Vagina (tissue), 2 donors: ENCODE measurements at regions of chr6 and their contacts with region 1.

Region 1: DNA sequence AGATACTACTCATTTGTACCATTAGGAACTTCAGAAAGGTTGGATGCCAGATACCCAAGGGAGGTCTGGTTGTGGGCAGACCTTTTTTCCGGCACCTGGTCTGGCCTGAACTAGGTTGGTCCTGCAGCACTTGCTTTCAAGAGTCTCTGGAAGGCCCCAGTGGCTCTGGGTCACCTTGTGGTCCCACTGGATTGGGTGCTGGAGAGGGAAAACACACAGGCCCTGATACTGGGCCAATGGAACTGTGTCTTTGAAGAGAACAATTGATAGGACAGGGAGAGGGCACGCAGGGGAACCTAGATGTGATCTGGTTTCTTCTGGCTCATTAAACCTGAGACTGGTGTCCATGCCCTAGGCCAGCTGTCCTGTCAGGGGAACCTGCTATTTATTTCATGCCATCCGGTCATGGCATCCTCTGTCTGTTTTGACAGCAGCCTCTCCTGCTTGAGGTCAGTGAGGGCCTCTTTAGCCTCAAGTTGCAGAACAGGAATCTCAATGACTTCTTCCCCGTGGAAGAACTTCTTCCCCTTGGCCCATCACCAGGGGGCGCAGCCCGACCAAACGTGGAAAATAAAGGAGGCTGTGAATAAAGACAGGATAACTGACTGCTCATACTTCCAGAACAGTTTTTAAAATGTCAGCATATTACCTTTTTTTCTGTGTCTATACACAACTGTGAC is 25.0 kb downstream of the TAF8 start:
- DNase-seq: no peak
- H3K4me3 ChIP-seq: no peak overlapping the region
- H3K27ac ChIP-seq: no peak overlapping the region
- H3K4me1 ChIP-seq: no peaks in the 10 kb centered on the region
- H3K27me3 ChIP-seq: no peaks in the 10 kb centered on the region
- CTCF ChIP-seq: peak; percentile 49 to 68 (median 66)
- POLR2A ChIP-seq: no peak

Region 2: DNA sequence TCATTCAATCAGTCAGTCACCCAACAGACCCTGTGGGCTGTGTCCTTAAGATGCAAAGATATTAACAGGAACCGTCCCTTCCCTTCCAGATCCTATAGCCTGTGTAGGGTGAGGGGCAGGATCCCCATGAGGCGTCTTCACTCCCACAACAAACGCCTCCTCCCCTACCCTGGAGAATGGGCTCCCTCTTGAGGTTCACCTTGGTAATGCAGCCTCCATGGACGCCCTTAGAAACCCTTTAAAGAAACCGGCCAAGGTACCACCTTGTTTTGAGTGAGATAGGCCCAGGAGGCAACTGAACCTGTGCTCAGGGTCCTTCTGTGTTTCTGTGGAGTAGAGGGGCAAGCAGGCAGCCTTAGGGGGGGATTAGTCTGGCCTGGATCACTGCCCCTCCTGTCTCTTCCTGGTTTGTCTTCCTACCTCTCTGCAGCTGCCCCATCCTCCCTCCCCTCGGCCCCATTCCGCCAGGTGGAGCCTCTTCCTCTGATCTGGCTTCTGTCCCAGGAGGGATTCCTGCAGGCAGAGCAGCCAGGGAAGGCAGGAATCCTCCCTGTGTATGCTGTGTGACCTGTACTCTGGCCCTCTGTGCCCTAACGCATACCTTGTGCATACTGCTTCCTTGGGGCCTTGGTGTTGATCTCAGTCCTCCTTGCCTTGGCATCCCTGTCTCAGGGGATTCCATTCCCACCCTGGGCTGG is 91.3 kb after region 1 on chr6:
- intact Hi-C with region 1: loop called (anchors 5 kb)
- DNase-seq: peak in 1 of 2 donors; percentile 74
- H3K4me3 ChIP-seq: no peak overlapping the region
- H3K27ac ChIP-seq: no peak overlapping the region
- H3K4me1 ChIP-seq: no peaks in the 10 kb centered on the region
- H3K27me3 ChIP-seq: no peaks in the 10 kb centered on the region
- CTCF ChIP-seq: peak; percentile 91 to 95 (median 93)
- POLR2A ChIP-seq: no peak